A549 (cell line): ENCODE measurements at regions of chr5 and their contacts with region 1.

Region 1: GRCh38 chr5:36695677-36696673 is 89.6 kb downstream of the SLC1A3 start:
- DNase-seq: peak; percentile 55 to 71
- ATAC-seq: peak; percentile 74 to 84; a peak in 5 of 6 replicates
- H3K4me3 ChIP-seq: no peak overlapping the region
- H3K27ac ChIP-seq: no peak overlapping the region
- H3K4me1 ChIP-seq: no peaks in the 10 kb centered on the region
- CTCF ChIP-seq: peak; percentile 56
- EP300 ChIP-seq: no peak
- POLR2A ChIP-seq: no peak
- RAD21 ChIP-seq: peak; percentile 62 to 66

Region 2: GRCh38 chr5:36414869-36415282 is 281.1 kb before region 1 on chr5:
- CTCF ChIA-PET with region 1: interaction called, 60 read pairs
- POLR2A ChIA-PET with region 1: no interaction called
- DNase-seq: peak in 1 of 2 experiments; percentile 55
- ATAC-seq: peak in 1 of 2 experiments; percentile 50; a peak in 3 of 6 replicates
- H3K4me3 ChIP-seq: no peak overlapping the region
- H3K27ac ChIP-seq: no peak overlapping the region
- H3K4me1 ChIP-seq: no peaks in the 10 kb centered on the region
- CTCF ChIP-seq: peak; percentile 57
- EP300 ChIP-seq: no peak
- POLR2A ChIP-seq: no peak
- RAD21 ChIP-seq: peak; percentile 60 to 67

Region 3: GRCh38 chr5:36683821-36684434 is 12.0 kb before region 1 on chr5:
- CTCF ChIA-PET with region 1: interaction called, 16 read pairs
- POLR2A ChIA-PET with region 1: no interaction called
- DNase-seq: no peak
- ATAC-seq: no peak
- H3K4me3 ChIP-seq: no peak overlapping the region
- H3K27ac ChIP-seq: no peak overlapping the region
- H3K4me1 ChIP-seq: no peaks in the 10 kb centered on the region
- CTCF ChIP-seq: no peak
- EP300 ChIP-seq: no peak
- POLR2A ChIP-seq: no peak
- RAD21 ChIP-seq: no peak

Region 4: GRCh38 chr5:36713541-36713940 is 17.6 kb after region 1 on chr5:
- CTCF ChIA-PET with region 1: interaction called, 14 read pairs
- POLR2A ChIA-PET with region 1: no interaction called
- DNase-seq: no peak
- ATAC-seq: no peak
- H3K4me3 ChIP-seq: no peak overlapping the region
- H3K27ac ChIP-seq: no peak overlapping the region
- H3K4me1 ChIP-seq: no peaks in the 10 kb centered on the region
- CTCF ChIP-seq: no peak
- EP300 ChIP-seq: no peak
- POLR2A ChIP-seq: no peak
- RAD21 ChIP-seq: no peak

Region 5: DNA sequence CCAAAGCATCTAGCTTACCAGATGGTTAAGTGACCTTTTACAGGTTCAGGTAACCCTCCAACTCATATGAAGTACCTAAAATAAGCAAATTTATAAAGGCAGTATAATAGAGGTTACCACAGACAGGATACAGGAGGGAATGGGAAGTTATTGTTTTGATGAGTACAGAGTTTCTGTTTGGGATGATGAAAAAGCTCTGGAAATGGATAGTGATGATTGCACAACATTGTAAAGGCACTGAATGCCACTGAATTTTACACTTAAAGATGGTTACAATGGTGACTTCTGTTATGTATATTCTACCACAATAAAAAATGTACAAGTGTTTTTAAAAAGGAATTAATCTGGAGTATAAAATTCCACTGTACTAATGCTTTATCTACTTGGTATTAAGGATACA is 105.5 kb after region 1 on chr5:
- CTCF ChIA-PET with region 1: no interaction called
- POLR2A ChIA-PET with region 1: no interaction called
- DNase-seq: no peak
- ATAC-seq: no peak
- H3K4me3 ChIP-seq: no peak overlapping the region
- H3K27ac ChIP-seq: no peak overlapping the region
- H3K4me1 ChIP-seq: no peaks in the 10 kb centered on the region
- CTCF ChIP-seq: no peak
- EP300 ChIP-seq: no peak
- POLR2A ChIP-seq: no peak
- RAD21 ChIP-seq: no peak